Endothelial cell of umbilical vein (primary cell): ENCODE measurements at regions of chr17 and their contacts with region 1.

Region 1: DNA sequence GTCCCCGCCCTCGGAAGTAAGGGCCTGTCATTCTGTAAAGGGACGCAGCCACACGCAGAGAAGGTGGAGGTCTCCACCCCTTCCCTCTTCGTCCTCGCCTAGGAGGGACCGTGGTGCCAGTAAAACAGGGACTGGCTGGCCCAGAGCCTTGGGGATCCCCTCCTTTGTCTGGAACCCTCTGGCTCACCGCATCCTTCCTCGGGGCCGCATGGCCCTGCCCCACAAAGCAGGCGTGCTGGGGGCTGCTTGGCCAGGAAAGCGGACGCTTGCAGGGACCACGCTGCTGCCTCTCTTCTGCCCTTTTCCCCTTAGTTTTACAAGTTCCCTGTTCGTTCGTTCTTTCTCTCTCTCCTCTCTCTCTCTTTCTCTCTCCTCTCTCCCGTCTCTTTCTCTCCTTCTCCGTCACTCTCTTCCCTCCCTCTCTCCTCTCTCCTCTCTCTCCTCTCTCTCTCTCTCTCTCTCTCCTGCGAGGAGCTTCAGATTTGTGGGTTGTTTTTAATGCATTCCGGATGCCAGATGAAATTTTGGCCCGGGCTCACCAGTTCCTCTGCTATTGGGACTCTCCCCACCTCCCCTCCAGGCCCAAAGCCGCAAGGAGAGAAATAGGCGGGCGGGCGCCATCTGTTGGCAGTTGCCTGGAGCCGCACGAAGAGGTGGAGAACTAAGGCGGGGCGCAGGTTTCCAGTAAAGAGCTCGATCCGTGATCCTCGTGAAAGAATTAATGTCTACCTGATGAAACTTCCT is 35.1 kb upstream of the CDRT4 start:
- DNase-seq: peak; percentile 58
- H3K4me3 ChIP-seq: no peak overlapping the region
- H3K27ac ChIP-seq: peak overlapping the region; percentile 13
- H3K4me1 ChIP-seq: peaks cover 15% of the 10 kb centered on the region
- H3K27me3 ChIP-seq: no peaks in the 10 kb centered on the region
- CTCF ChIP-seq: peak; percentile 90 to 91
- POLR2A ChIP-seq: no peak

Region 2: GRCh38 chr17:15106540-15106939 is 396.0 kb before region 1 on chr17:
- CTCF ChIA-PET with region 1: no interaction called
- POLR2A ChIA-PET with region 1: no interaction called
- dilution Hi-C with region 1: no loop called
- intact Hi-C with region 1: no loop called
- DNase-seq: no peak
- H3K4me3 ChIP-seq: no peak overlapping the region
- H3K27ac ChIP-seq: no peak overlapping the region
- H3K4me1 ChIP-seq: no peaks in the 10 kb centered on the region
- H3K27me3 ChIP-seq: no peaks in the 10 kb centered on the region
- CTCF ChIP-seq: no peak
- POLR2A ChIP-seq: no peak

Region 3: GRCh38 chr17:15247891-15248529 is 254.5 kb before region 1 on chr17:
- CTCF ChIA-PET with region 1: interaction called, 36 read pairs
- POLR2A ChIA-PET with region 1: no interaction called
- dilution Hi-C with region 1: no loop called
- intact Hi-C with region 1: no loop called
- DNase-seq: peak; percentile 8
- H3K4me3 ChIP-seq: no peak overlapping the region
- H3K27ac ChIP-seq: no peak overlapping the region
- H3K4me1 ChIP-seq: no peaks in the 10 kb centered on the region
- H3K27me3 ChIP-seq: no peaks in the 10 kb centered on the region
- CTCF ChIP-seq: peak; percentile 30 to 42
- POLR2A ChIP-seq: no peak

Region 4: GRCh38 chr17:15267996-15268395 is 234.5 kb before region 1 on chr17:
- CTCF ChIA-PET with region 1: interaction called, 410 read pairs
- POLR2A ChIA-PET with region 1: no interaction called
- dilution Hi-C with region 1: no loop called
- intact Hi-C with region 1: no loop called
- DNase-seq: no peak
- H3K4me3 ChIP-seq: no peak overlapping the region
- H3K27ac ChIP-seq: no peak overlapping the region
- H3K4me1 ChIP-seq: peaks cover 5% of the 10 kb centered on the region
- H3K27me3 ChIP-seq: peaks cover 0 to 12% of the 10 kb centered on the region in 2 experiments
- CTCF ChIP-seq: no peak
- POLR2A ChIP-seq: no peak

Region 5: DNA sequence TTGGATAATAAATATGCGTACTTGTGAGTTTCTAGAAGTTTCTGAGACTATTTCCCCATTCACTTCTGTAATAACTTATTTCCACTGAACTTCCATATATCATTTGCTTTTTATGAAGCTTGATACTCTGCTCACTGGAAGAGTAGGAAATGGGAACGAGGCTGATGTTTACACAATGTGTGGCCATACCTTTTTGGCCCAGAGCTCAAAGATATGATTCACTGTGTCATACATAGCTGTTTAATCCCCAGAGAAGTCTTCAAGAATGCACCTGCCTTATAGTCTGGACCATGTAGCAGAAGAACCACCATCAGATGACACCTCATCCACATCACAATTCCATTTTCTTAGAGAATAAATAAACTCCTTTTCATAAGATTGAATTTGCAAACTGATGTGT is 120.8 kb before region 1 on chr17:
- CTCF ChIA-PET with region 1: interaction called, 10 read pairs
- POLR2A ChIA-PET with region 1: no interaction called
- dilution Hi-C with region 1: no loop called
- intact Hi-C with region 1: no loop called
- DNase-seq: no peak
- H3K4me3 ChIP-seq: no peak overlapping the region
- H3K27ac ChIP-seq: no peak overlapping the region
- H3K4me1 ChIP-seq: peaks cover 3% of the 10 kb centered on the region
- H3K27me3 ChIP-seq: peaks cover 2 to 7% of the 10 kb centered on the region in 2 experiments
- CTCF ChIP-seq: no peak
- POLR2A ChIP-seq: no peak

Region 6: DNA sequence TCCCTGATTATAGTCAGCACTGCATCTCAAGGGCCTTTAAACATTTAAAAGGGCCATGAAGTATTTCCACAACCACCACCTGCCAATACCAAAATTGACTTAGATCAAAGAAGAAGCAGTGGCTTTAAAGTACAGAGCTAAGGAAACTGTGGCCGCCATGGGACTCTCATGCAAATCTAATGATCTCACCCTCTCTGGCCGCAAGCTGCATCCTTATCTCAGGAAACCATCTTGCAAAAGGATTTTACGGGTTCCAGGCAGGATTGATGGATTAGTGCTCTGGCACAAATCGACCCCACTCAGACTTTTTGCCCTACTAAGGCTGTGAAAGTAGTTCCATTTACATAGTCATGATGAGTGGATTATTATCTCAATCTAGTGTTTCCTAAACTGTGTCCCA is 57.7 kb before region 1 on chr17:
- CTCF ChIA-PET with region 1: interaction called, 32 read pairs
- POLR2A ChIA-PET with region 1: no interaction called
- dilution Hi-C with region 1: no loop called
- intact Hi-C with region 1: loop called (anchors 2 kb)
- DNase-seq: peak; percentile 96
- H3K4me3 ChIP-seq: no peak overlapping the region
- H3K27ac ChIP-seq: peak overlapping the region; percentile 92
- H3K4me1 ChIP-seq: peaks cover 51% of the 10 kb centered on the region
- H3K27me3 ChIP-seq: no peaks in the 10 kb centered on the region
- CTCF ChIP-seq: no peak
- POLR2A ChIP-seq: peak; percentile 74

Region 7: DNA sequence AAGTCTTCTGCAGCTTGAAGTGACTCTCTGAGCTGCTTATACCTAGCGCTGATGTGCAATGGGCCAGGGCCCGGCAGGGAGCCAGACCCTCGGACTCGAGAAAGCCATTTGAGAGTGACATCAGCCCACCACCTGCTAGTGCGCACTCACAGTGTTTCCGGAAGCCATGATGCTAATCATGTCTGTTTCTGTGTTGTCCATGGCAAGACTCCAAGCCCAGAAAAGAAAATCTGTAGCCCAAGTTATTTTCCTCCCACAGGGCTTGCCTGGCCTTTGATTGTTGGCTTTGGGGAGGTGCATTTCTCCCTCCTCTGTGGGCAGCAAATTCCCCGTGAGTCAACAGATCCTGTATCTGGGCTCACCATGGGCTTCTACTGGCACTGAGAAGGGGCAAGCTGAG is 33.3 kb before region 1 on chr17:
- CTCF ChIA-PET with region 1: interaction called, 11 read pairs
- POLR2A ChIA-PET with region 1: no interaction called
- dilution Hi-C with region 1: no loop called
- intact Hi-C with region 1: no loop called
- DNase-seq: peak; percentile 72
- H3K4me3 ChIP-seq: no peak overlapping the region
- H3K27ac ChIP-seq: peak overlapping the region; percentile 0
- H3K4me1 ChIP-seq: peaks cover 10% of the 10 kb centered on the region
- H3K27me3 ChIP-seq: no peaks in the 10 kb centered on the region
- CTCF ChIP-seq: no peak
- POLR2A ChIP-seq: no peak

Region 8: DNA sequence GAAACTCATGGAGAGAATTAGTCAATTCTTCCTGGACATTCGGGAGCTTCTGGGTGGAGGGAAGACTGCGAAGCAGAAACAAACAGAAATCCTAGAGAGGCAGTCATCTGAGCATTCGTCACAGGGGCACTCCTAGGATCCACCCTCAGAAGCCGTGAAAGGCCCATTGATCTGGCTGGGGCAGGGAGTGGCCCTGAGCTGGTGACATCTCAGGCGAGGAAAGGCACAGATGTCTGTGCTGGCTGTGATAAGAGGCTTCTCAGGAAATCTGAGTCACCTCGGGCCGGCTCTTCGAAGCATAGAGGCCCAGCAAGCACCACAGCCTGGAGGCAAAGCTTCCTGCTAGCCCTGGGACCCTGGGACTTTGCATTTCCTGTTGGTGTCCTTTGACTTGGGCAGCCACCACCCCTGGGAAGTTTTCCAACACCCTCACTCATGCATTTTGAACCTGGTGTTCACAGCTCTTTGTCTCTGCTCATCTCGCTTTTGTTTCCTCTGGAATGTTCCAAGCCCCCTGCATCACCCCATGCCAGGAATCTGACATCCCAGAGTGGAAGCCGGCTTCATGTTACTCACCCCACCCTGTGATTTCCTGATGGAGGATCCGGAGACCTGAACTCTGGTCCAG is 11.8 kb before region 1 on chr17:
- CTCF ChIA-PET with region 1: interaction called, 42 read pairs
- POLR2A ChIA-PET with region 1: no interaction called
- dilution Hi-C with region 1: no loop called
- intact Hi-C with region 1: loop called (anchors 1 kb)
- DNase-seq: peak; percentile 93
- H3K4me3 ChIP-seq: no peak overlapping the region
- H3K27ac ChIP-seq: peak overlapping the region; percentile 91
- H3K4me1 ChIP-seq: peaks cover 23% of the 10 kb centered on the region
- H3K27me3 ChIP-seq: no peaks in the 10 kb centered on the region
- CTCF ChIP-seq: no peak
- POLR2A ChIP-seq: peak; percentile 55